Activated CD4-positive, alpha-beta memory T cell treated with anti-CD3 and anti-CD28 coated beads for 36 hours (primary cell): ENCODE measurements at regions of chr2 and their contacts with region 1.

Region 1: DNA sequence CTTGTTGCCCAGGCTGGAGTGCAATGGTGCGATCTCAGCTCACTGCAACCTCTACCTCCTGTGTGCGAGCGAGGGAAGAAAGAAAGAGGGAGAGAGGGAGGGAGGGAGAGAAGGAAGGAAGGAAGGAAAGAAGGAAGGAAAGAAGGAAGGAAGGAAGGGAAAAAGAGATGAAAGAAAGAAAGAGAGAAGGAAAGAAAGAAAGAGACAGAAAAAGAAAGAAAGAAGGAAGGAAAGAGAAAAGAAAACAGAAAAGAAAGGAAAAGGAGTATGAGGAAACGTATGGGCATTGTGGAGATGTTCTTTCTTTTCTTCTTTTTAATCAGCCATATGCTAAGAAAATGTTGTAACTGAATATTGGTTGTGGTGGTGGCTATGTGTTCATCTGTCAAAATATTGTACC is 16.5 kb downstream of the CLK1 start:
- DNase-seq: no peak
- H3K4me3 Mint-ChIP-seq: no peak overlapping the region
- H3K27ac Mint-ChIP-seq: no peak overlapping the region
- H3K4me1 Mint-ChIP-seq: no peaks in the 10 kb centered on the region
- H3K27me3 Mint-ChIP-seq: no peaks in the 10 kb centered on the region

Region 2: DNA sequence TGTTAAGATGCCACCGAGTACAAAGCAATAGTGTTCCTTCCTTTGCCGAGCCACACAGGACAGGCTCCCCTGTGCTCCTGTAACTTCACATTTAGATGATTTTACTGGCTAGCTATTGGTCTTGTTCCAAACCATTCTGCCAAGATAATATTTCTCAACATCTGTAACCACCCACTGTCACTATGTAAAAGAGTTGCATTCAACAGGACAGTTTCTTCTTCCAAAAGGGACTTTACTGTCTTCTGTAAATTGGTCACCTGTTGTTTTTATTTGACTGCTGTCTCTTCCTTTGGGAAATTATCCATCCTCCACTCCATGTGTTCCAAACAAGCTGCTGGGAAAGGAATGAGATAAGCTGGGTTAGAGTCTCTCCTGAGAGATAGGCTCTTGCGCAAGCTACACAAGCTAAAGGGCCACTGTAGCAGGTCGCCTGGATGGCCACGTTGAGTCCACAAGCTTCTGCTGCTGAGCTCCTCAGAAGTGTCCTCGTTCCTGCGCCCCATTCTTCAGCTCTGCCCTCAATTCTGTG is 50.6 kb before region 1 on chr2:
- CTCF ChIA-PET with region 1: no interaction called
- POLR2A ChIA-PET with region 1: no interaction called
- intact Hi-C with region 1: no loop called
- DNase-seq: no peak
- H3K4me3 Mint-ChIP-seq: no peak overlapping the region
- H3K27ac Mint-ChIP-seq: no peak overlapping the region
- H3K4me1 Mint-ChIP-seq: peaks cover 4% of the 10 kb centered on the region
- H3K27me3 Mint-ChIP-seq: no peaks in the 10 kb centered on the region

Region 3: GRCh38 chr2:200829258-200829655 is 18.7 kb before region 1 on chr2:
- CTCF ChIA-PET with region 1: interaction called, 3 read pairs
- POLR2A ChIA-PET with region 1: interaction called, 20 read pairs
- intact Hi-C with region 1: no loop called
- DNase-seq: no peak
- H3K4me3 Mint-ChIP-seq: no peak overlapping the region
- H3K27ac Mint-ChIP-seq: no peak overlapping the region
- H3K4me1 Mint-ChIP-seq: no peaks in the 10 kb centered on the region
- H3K27me3 Mint-ChIP-seq: no peaks in the 10 kb centered on the region

Region 4: DNA sequence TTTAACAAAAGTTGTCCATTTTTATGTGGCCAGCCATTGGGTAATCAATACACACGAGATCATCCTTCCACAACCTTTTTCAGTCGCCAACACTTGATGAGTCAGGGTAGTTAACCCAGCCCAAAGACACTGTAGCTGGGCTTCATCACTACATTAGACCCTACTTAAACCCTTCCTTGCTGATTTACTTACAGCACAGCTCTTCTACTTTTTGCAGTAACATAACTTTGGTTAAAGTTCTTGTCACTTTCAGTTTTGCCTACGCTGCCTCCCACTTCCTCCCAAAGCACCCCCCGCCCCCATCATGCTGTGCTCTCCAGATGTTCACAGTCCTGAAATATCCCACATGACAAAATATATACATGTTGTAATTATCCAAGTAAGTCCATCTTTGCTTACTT is 1062.0 kb after region 1 on chr2:
- CTCF ChIA-PET with region 1: no interaction called
- POLR2A ChIA-PET with region 1: no interaction called
- intact Hi-C with region 1: no loop called
- DNase-seq: peak; percentile 16
- H3K4me3 Mint-ChIP-seq: no peak overlapping the region
- H3K27ac Mint-ChIP-seq: no peak overlapping the region
- H3K4me1 Mint-ChIP-seq: peaks cover 7% of the 10 kb centered on the region
- H3K27me3 Mint-ChIP-seq: peaks cover 10% of the 10 kb centered on the region